HepG2 (cell line): ENCODE measurements at regions of chr12 and their contacts with region 1.

Region 1: GRCh38 chr12:120228291-120229070 is 27.6 kb upstream of the RPLP0 start:
- DNase-seq: peak; percentile 91
- ATAC-seq: peak; percentile 81
- H3K4me3 ChIP-seq: peak overlapping the region; percentile 50 to 70 (median 58)
- H3K27ac ChIP-seq: peak overlapping the region; percentile 100
- H3K4me1 ChIP-seq: peaks cover 92% of the 10 kb centered on the region
- H3K27me3 ChIP-seq: no peaks in the 10 kb centered on the region
- CTCF ChIP-seq: peak; percentile 98
- EP300 ChIP-seq: peak; percentile 40 to 58; a peak in 2 of 4 replicates
- POLR2A ChIP-seq: peak; percentile 38 to 64
- RAD21 ChIP-seq: peak; percentile 96

Region 2: DNA sequence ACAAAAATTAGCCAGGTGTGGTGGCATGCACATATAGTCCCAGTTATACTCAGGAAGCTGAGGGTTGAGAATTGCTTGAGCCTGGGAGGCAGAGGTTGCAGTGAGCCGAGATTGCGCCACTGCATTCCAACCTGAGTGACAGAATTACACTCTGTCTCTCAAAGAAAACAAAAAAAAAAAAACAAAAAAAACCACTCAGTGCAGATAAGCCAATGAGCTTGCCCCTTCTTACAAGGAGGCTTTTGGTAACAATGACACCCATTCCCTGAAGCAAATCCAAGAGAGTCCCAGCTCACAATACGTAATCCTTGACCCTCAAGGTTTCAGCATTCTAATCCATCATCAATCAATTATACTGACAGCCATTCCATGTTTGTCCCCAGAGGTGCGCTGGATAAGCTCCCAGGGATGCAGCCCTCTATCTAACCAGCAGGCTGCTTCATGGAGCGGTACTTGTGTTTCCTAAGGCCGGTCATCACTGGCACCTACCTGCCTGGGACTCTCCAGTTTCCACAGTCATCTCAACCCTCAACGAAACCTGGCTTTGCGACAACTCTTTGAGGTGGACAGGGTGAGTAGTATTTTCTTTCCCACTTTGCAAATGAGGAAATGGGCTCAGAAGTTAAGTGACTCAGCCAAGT is 46.4 kb before region 1 on chr12:
- CTCF ChIA-PET with region 1: no interaction called
- POLR2A ChIA-PET with region 1: interaction called, 12 read pairs
- in situ Hi-C with region 1: no loop called
- intact Hi-C with region 1: no loop called
- DNase-seq: peak; percentile 63
- ATAC-seq: peak; percentile 89
- H3K4me3 ChIP-seq: no peak overlapping the region
- H3K27ac ChIP-seq: peak overlapping the region; percentile 54
- H3K4me1 ChIP-seq: peaks cover 36% of the 10 kb centered on the region
- H3K27me3 ChIP-seq: no peaks in the 10 kb centered on the region
- CTCF ChIP-seq: no peak
- EP300 ChIP-seq: no peak
- POLR2A ChIP-seq: no peak
- RAD21 ChIP-seq: no peak

Region 3: DNA sequence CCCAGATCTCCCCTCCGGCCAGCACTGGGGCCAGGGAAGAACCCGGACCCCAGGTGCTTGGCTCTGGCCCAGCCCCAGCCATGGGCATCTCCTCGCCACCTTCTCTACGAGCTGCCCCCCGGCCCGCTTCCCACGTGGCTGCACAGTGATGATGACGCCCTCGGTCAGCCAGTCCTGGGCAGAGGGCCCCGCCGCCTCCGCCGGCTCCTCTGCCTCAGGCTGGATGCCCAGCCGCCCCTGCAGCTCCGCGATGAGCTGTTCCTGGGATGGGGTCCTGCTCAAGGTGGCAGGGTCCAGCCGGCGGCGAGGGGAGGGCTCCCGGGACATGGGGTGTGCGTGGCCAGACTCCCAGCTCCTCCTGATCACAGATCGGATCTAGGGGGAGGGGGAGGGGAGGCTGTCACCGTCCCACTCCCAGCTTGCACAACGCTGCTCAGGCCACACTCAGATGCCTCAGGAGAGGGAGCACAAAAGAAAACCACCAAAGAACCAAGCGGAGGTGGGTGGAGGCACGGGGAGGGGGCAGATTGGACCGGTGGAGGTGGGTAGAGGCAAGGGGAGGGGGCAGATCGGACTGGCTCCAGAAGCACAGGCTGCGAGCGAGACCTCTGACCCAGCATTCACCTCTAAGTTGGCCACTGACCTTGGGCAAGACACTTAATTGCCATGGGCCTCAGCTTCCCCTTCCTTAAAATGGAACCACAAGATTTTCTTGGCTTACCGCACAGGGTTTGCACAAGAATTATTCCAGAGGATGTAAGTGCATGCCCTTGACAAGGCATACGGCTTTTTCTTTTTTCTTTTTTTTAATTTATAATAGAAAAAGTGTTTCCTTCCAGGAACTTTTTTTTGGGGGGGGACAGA is 11.5 kb before region 1 on chr12:
- CTCF ChIA-PET with region 1: no interaction called
- POLR2A ChIA-PET with region 1: interaction called, 80 read pairs
- in situ Hi-C with region 1: no loop called
- intact Hi-C with region 1: no loop called
- DNase-seq: no peak
- ATAC-seq: no peak
- H3K4me3 ChIP-seq: no peak overlapping the region
- H3K27ac ChIP-seq: no peak overlapping the region
- H3K4me1 ChIP-seq: peaks cover 40% of the 10 kb centered on the region
- H3K27me3 ChIP-seq: no peaks in the 10 kb centered on the region; a peak in 1 of 5 replicates
- CTCF ChIP-seq: no peak
- EP300 ChIP-seq: no peak
- POLR2A ChIP-seq: 0 out of 4 replicates have a peak, but pooled peaks of 1 of the 2 experiments have one; percentile 23
- RAD21 ChIP-seq: no peak

Region 4: DNA sequence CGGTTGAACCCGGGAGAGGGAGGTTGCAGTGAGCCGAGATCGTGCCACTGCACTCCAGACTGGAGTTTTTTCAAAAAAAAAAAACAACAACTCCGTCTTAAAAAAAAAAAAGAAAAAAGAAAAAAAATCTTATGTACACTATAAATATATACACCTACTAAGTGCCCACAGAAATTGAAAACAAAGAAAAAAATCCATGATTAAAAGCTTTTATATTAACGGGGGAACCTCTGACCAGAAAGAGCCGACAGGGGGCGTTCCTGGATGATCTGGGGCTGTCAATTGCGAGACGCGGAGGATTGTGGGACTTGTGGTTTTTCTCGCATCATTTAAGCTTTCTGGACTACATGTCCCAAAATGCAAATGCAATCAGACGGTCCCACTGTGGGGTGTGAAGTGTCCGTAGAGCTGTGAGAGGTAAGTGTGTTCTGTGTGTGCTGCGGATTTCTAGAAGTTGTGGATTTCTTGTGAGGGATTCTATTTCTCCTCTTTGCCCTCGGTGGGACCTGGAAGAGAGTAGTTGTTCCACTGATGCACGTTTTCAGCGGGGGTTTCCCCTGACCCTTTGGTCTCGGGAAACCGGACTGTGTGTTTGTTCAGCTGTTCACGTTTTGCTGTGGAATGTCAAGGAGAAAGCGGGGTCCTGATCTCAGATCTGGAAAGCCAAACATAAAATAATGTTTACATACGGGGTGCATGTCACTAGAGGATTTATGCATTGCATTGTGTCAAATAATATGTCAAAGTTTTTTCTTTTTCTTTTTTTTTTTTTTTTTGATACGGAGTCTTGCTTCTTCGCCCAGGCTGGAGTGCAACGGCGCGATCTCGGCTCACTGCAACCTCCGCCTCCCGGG is 73.7 kb after region 1 on chr12 and contains the start of gene SIRT4:
- CTCF ChIA-PET with region 1: no interaction called
- POLR2A ChIA-PET with region 1: interaction called, 17 read pairs
- in situ Hi-C with region 1: no loop called
- intact Hi-C with region 1: no loop called
- DNase-seq: peak; percentile 93
- ATAC-seq: peak; percentile 96
- H3K4me3 ChIP-seq: peak within 1 kb of the TSS; percentile 66 to 79 (median 71)
- H3K27ac ChIP-seq: peak within 1 kb of the TSS; percentile 70
- H3K4me1 ChIP-seq: peaks cover 10% of the 10 kb centered on the region
- H3K27me3 ChIP-seq: no peaks in the 10 kb centered on the region
- CTCF ChIP-seq: peak; percentile 82
- EP300 ChIP-seq: 0 out of 4 replicates have a peak, but pooled peaks of 1 of the 2 experiments have one; percentile 12
- POLR2A ChIP-seq: peak; percentile 45 to 53
- RAD21 ChIP-seq: 0 out of 2 replicates have a peak, but pooled peaks have one; percentile 15
- total RNA-seq, gene SIRT4: 3.4 and 7.0 TPM in 2 replicates